PC-3 (cell line): ENCODE measurements at regions of chr14 and their contacts with region 1.

Region 1: GRCh38 chr14:32134448-32135070 is 57.5 kb downstream of the ARHGAP5 start:
- DNase-seq: peak; percentile 93
- ATAC-seq: peak; percentile 92
- H3K4me3 ChIP-seq: no peak overlapping the region
- H3K27ac ChIP-seq: peak overlapping the region; percentile 79
- H3K4me1 ChIP-seq: peaks cover 23% of the 10 kb centered on the region
- H3K27me3 ChIP-seq: no peaks in the 10 kb centered on the region
- CTCF ChIP-seq: no peak

Region 2: DNA sequence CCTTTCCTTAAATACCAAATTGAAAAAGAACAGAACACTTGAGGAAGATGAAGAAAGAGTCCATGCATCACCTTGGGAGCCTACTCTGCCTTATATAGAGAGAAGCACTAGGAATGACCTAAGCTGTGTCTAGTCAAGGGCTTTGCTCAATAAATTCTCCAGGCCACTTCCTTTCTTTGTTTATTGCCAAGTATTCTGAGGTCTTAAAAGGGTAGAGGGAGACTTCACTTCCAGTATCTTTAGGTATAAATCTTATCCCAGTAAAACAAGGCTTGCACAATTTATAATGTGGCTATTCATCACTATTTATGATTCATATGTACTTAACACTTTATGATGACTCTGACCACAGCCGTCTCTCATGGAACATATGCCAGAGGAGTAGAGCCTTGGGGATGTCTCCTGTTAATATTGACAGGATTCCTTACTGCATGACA is 142.5 kb before region 1 on chr14:
- CTCF ChIA-PET with region 1: no interaction called
- POLR2A ChIA-PET with region 1: no interaction called
- intact Hi-C with region 1: loop called (anchors 10 kb)
- DNase-seq: peak; percentile 92
- ATAC-seq: peak; percentile 88
- H3K4me3 ChIP-seq: no peak overlapping the region
- H3K27ac ChIP-seq: peak overlapping the region; percentile 75
- H3K4me1 ChIP-seq: peaks cover 33% of the 10 kb centered on the region
- H3K27me3 ChIP-seq: no peaks in the 10 kb centered on the region
- CTCF ChIP-seq: no peak

Region 3: DNA sequence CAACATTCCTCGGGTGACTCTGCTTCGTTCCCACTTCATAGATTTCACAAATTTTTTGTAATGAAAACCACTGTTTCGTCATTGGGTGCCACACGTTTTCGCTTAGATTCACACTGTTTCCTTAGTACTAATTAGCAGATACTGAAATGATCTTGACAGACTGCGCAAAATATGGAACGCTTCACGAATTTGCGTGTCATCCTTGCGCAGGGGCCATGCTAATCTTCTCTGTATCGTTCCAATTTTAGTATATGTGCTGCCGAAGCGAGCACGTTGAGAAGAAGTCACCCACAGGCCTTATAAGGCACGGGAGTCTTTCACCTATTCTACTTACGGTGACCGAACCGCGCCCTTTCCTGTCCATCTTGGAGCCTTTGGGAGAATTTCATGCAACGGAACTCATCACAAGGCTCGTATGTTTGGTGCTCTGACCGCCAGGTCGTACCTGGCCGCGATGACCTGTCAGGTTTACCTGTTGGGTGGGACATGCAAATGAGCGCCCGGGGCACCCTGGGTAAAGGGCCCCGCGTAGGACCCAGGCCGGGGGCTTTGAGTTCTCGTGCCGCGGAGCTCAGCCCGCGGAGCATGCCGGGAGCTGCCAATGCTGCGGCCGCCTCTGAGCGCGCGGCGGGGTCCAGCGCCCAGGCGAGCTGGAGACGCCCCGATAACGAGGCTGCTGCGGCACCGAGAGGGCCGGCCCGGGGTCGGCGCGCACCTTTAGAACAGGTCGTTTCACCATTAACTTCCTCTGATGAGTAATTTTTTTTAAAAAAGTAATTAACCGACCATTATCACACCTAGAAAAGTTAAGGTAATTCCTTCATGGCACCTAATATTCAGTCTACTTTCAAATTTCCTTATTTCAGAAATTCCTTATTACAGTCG is 68.7 kb after region 1 on chr14 and contains the start of gene RNU6-8:
- CTCF ChIA-PET with region 1: no interaction called
- POLR2A ChIA-PET with region 1: no interaction called
- intact Hi-C with region 1: loop called (anchors 2 kb)
- DNase-seq: peak; percentile 92
- ATAC-seq: peak; percentile 68
- H3K4me3 ChIP-seq: peak within 1 kb of the TSS; percentile 87
- H3K27ac ChIP-seq: peak within 1 kb of the TSS; percentile 65
- H3K4me1 ChIP-seq: peaks cover 21% of the 10 kb centered on the region; the same call in 1 of the 2 replicates
- H3K27me3 ChIP-seq: no peaks in the 10 kb centered on the region
- CTCF ChIP-seq: no peak
- total RNA-seq, gene RNU6-8: not detected in 2 replicates